ENCODE measurements at regions of chrX and their contacts with region 1.

Region 1: DNA sequence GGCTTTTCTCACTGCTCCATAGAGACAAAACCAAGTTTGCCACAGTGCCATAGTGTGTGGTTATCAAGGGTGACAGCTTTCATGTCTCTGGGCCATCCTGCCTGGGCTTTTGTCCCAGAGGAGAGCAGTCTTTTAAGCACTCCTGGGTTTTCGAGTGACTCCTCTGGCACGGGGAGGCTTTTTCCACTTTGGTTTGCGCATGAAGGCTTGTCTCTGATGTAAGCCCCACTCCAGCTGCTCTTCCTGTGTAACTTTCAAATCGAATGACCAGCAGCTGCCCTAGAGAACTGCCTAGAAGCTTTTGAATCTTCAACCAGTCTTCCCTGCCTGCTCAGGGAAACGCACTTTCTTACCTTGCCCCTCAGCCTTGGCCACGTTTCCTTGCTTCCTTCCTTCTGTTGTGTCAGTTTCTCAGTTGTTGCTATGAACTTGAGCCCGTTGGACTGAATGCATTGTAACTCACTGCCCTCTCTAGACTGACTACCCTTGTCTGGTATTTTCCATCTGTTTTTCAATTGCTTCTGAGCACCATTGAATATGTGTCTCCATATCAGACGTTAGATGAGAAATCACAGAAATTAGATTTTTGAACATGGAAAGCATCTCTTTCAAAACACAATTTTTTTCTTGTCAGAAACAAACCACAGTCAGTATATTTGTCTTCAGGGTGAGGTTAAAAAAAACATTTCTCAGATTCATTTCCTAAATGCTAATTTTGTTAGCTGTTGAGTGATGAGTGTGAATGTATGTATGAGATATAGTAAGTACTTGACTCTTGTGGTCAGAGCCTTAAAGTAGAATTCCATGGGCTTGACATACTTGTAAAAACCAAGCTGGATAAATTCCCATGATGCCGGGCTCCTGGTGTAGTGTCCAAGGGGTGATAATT is 45.3 kb downstream of the SLC9A6 start:
- DNase-seq: no peak
- ATAC-seq: no peak
- H3K4me3 ChIP-seq: no peak overlapping the region
- H3K27ac ChIP-seq: peak overlapping the region; percentile 55
- H3K4me1 ChIP-seq: no peaks in the 10 kb centered on the region
- H3K27me3 ChIP-seq: no peaks in the 10 kb centered on the region
- CTCF ChIP-seq: no peak

Region 2: DNA sequence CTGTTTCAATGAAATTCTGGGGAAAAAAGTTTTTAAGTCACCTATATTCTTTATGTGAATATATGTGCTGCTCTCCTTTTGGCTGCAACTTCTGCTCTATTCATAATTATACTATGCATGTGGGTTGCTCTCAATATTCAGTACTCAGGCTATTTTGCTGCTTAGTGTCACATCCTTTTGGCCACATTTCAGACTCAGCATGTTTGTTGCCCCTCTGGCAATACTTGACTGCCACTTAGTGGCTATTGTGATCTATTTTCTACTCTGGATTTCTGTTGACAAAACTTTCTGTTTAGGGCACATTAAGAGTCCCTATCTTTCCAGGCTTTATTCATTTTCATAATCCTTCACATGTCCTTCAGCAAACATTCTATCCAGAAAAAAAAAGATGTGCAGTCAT is 332.9 kb before region 1 on chrX:
- intact Hi-C with region 1: no loop called
- DNase-seq: no peak
- ATAC-seq: no peak
- H3K4me3 ChIP-seq: no peak overlapping the region
- H3K27ac ChIP-seq: no peak overlapping the region
- H3K4me1 ChIP-seq: no peaks in the 10 kb centered on the region
- H3K27me3 ChIP-seq: no peaks in the 10 kb centered on the region
- CTCF ChIP-seq: no peak

Region 3: DNA sequence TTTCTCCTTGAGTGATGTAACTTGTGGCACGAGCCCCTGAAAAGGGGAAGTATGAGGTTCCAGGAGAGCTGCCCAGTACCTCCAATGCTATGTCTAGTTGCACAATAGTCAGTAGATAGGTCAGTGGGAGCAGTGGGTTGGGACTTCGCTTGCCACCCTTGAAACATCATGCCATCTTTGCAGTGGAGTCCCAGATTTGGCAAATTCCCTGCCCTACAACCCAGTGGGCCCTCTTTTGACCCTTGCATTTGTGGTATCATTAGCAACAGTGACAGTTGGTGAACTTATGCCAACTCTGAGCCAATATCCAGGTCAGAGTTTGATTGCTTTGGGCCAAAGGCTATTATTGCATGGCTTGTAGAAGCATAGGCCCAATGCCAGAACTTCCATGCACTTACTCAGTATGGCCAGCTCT is 129.1 kb after region 1 on chrX:
- intact Hi-C with region 1: loop called (anchors 10 kb)
- DNase-seq: no peak
- ATAC-seq: peak; percentile 78
- H3K4me3 ChIP-seq: no peak overlapping the region
- H3K27ac ChIP-seq: no peak overlapping the region
- H3K4me1 ChIP-seq: no peaks in the 10 kb centered on the region
- H3K27me3 ChIP-seq: no peaks in the 10 kb centered on the region
- CTCF ChIP-seq: no peak

Region 4: GRCh38 chrX:136423724-136424123 is 393.2 kb after region 1 on chrX:
- intact Hi-C with region 1: no loop called
- DNase-seq: no peak
- ATAC-seq: no peak
- H3K4me3 ChIP-seq: no peak overlapping the region
- H3K27ac ChIP-seq: no peak overlapping the region
- H3K4me1 ChIP-seq: no peaks in the 10 kb centered on the region
- H3K27me3 ChIP-seq: no peaks in the 10 kb centered on the region
- CTCF ChIP-seq: no peak